Activated B cell treated with CpG ODN at 0.5 μM for 24 hours (primary cell): ENCODE measurements at regions of chr3 and their contacts with region 1.

Region 1: DNA sequence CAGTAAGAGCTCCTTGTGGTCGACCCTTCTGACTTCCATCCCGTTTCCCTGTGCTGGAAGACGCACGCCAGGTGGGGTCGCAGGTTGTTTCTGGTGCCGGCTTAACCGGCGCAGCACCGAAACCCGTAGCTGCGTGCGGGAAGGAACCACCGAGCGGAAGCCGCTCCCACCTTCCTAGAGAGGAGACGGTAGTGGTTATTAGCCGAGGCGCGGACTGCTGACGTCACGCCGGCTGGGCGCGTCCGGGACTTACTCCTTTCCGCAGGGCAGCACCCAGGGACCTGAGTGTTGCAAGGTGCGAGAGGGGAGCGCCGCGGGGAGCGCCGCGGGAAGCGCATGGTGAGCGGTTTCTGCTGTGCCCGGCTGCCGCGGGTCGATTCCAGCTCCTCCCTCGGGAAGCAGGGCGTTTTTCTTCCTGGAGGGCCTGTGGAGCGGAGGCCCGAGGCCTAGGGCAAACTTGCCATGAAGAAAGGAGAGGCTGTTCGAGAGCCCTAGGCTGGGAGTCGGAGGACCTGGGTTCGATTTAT is at the start of gene ZNF501:
- DNase-seq: peak; percentile 80
- ATAC-seq: peak; percentile 98
- H3K4me3 Mint-ChIP-seq: peak within 1 kb of the TSS; percentile 92
- H3K27ac Mint-ChIP-seq: peak within 1 kb of the TSS; percentile 75
- H3K4me1 Mint-ChIP-seq: peaks cover 15% of the 10 kb centered on the region
- H3K27me3 Mint-ChIP-seq: no peaks in the 10 kb centered on the region
- CTCF ChIP-seq: no peak
- total RNA-seq, gene ZNF501: 6.2 and 6.5 TPM in 2 replicates

Region 2: DNA sequence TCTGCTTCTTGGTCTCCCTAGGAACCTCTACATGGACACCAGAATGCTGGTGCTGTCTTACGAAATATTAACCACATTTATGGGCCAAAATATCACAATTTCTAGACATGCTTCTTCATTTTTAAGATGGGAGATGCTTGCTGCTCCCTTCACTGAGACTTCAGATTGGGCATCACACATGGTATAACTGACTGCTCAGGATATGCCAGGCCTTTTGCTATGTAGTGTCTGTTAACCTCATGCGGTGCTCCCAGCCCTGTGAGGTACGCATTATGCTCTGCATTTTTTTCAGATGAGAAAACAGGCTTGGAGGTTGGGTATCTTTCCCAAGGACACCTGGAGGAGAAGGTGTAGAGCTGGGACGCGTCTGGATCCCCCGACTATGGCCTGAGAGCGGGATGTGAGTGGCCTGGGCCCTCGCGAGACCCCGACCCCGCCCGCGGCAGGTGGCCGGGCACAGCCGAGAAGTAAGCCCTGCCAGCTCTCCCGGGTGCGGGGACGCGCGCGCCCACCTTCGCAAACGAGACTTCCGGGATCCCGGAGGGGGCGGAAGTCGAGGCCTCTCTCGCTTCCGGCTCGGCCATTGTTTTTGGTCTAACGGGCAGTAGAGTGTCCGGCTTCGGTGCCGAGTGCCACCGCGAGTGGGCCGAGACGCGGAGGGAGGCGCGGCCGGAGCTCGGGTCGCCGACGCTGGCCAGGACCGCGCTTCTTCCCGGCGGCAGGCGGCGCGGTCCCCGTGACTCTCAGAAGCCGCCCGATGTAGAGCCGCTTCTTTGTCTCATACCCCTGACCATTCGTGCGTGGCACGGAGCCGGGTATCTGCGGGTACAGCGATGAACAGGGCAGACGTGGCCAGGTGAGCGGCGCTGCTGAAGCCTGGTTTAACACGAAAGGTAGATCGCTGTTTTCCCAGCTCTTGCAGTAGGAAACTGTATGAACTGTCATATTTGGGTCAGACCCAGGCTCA is 174.5 kb before region 1 on chr3 and contains the start of gene ZKSCAN7:
- CTCF ChIA-PET with region 1: no interaction called
- POLR2A ChIA-PET with region 1: no interaction called
- intact Hi-C with region 1: loop called (anchors 10 kb)
- DNase-seq: peak; percentile 56
- ATAC-seq: peak; percentile 86
- H3K4me3 Mint-ChIP-seq: peak within 1 kb of the TSS; percentile 94
- H3K27ac Mint-ChIP-seq: peak within 1 kb of the TSS; percentile 87
- H3K4me1 Mint-ChIP-seq: peaks cover 20% of the 10 kb centered on the region
- H3K27me3 Mint-ChIP-seq: peaks cover 7% of the 10 kb centered on the region
- CTCF ChIP-seq: no peak
- total RNA-seq, gene ZKSCAN7: 6.8 and 9.2 TPM in 2 replicates

Region 3: DNA sequence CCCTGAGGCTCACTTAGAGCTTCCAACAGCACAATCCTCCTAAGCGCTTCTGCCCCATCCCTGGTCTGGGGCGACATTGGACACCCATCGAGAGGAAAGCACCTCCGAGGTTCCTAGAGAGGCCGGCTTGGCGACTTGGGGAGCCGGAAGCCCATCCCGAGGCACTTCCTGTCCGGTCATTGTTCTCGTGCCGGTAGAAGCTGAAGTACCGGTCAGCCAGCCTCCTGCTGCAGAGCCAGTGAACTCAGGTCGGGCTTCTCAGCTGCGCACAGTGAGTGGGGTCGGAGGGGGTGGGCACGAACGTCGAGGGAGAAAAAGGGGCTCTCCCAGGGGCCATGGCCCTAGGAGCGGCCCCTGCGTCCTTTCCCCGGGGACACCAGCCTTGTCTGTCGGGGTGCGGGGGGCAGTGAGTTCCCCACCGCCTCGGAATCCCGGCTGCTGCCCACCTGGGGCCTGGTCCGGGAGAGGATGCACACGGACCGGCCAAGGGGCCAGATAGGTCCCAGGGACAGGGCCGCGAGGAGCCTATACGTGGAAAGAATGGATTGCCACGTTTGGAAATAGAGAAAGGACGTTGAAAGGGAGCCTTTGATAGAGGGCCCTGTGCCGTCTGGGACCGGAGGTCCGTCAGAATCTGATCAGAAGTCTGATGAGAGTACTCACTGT is 80.8 kb before region 1 on chr3 and contains the start of gene ZNF35:
- CTCF ChIA-PET with region 1: no interaction called
- POLR2A ChIA-PET with region 1: interaction called, 3 read pairs
- intact Hi-C with region 1: loop called (anchors 1 kb)
- DNase-seq: peak; percentile 41
- ATAC-seq: peak; percentile 86
- H3K4me3 Mint-ChIP-seq: peak within 1 kb of the TSS; percentile 96
- H3K27ac Mint-ChIP-seq: peak within 1 kb of the TSS; percentile 83
- H3K4me1 Mint-ChIP-seq: peaks cover 24% of the 10 kb centered on the region
- H3K27me3 Mint-ChIP-seq: no peaks in the 10 kb centered on the region
- CTCF ChIP-seq: no peak
- total RNA-seq, gene ZNF35: 13.9 and 17.5 TPM in 2 replicates

Region 4: DNA sequence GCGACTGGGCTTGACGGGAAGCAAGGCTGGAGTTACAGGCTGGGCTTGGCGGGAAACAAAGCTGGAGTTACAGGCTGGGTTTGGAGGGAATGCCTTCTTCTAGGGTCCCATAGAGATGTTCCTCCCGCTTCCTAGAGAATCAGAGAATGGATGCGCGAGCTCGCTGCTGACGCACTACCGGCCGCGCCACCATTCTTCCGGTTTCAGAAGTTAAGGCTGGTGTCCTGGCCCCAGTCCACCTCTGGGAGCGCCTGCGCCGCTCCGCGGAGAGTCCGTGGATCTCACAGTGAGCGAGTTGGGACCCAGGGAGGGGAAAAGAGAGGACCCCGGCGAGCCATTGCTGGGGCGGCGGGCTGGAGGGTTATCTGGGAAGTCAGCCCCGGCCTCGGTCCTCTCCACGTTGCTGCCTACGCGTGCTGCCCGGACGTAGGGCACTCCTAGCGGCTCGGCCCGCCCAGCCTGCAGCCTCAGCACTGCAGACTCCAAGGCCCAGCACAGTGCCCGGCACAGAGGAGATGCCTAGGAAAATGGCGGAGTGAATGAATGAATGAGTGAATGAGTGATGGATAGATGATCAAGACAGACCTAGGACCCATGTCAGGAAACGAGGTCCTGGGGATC is 16.9 kb before region 1 on chr3 and contains the start of gene ZNF502:
- CTCF ChIA-PET with region 1: interaction called, 8 read pairs
- POLR2A ChIA-PET with region 1: interaction called, 22 read pairs
- intact Hi-C with region 1: loop called (anchors 1 kb)
- DNase-seq: peak; percentile 48
- ATAC-seq: peak; percentile 93
- H3K4me3 Mint-ChIP-seq: peak within 1 kb of the TSS; percentile 90
- H3K27ac Mint-ChIP-seq: peak within 1 kb of the TSS; percentile 50
- H3K4me1 Mint-ChIP-seq: peaks cover 13% of the 10 kb centered on the region
- H3K27me3 Mint-ChIP-seq: peaks cover 21% of the 10 kb centered on the region
- CTCF ChIP-seq: no peak
- total RNA-seq, gene ZNF502: 5.0 and 6.5 TPM in 2 replicates